ENCODE measurements at regions of chr1 and their contacts with region 1.

Region 1: DNA sequence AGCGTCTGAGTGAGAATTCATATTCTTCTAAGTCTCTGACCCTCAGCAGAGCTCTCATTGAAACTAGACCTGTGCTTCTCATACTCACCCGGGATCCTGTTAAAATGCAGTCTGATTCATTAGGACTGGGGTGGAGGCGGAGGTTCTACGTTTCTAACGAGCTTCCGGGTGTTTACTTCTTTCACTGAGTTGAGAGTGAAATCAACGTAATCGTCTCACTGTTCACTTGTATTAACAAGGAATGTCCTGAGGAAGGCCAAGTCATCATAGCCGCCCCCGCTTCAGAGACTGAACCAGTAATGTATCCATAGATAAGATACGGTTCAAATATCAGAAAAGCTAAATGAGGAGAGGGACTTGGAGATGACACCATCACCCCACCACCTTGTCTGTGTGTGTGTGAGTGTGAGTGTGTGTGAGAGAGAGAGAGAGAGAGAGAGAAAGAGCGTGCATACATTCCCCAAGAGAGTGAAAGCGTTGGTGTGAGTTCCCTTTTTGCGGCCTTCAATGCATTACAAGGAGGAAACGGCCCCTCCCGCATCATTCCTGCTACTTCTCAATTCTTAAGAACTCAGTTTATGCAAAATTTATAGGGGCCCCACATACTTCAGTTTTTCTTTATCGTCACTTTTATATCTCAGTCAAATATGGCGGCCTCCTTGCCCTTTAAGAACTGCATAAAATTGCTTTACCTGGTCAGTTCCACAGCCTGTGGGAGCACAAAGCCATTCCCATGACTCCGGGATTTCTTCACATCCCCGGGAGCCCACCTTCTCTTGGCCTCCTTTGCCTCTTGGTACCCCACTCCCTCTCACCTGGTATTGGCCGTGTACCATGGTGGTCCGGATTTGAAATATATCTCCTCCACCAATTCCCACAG is 19.8 kb downstream of the KMO start:
- DNase-seq: peak; percentile 93
- ATAC-seq: peak; percentile 91
- H3K4me3 ChIP-seq: peak overlapping the region; percentile 52 to 77 (median 65)
- H3K4me3 Mint-ChIP-seq: peak overlapping the region; percentile 93
- H3K27ac ChIP-seq: peak overlapping the region; percentile 95 to 97
- H3K27ac Mint-ChIP-seq: peak overlapping the region; percentile 99
- H3K4me1 ChIP-seq: peaks cover 39 to 41% of the 10 kb centered on the region in 2 donors
- H3K4me1 Mint-ChIP-seq: peaks cover 51% of the 10 kb centered on the region
- H3K27me3 ChIP-seq: no peaks in the 10 kb centered on the region
- H3K27me3 Mint-ChIP-seq: peaks cover 3% of the 10 kb centered on the region
- CTCF ChIP-seq: no peak

Region 2: DNA sequence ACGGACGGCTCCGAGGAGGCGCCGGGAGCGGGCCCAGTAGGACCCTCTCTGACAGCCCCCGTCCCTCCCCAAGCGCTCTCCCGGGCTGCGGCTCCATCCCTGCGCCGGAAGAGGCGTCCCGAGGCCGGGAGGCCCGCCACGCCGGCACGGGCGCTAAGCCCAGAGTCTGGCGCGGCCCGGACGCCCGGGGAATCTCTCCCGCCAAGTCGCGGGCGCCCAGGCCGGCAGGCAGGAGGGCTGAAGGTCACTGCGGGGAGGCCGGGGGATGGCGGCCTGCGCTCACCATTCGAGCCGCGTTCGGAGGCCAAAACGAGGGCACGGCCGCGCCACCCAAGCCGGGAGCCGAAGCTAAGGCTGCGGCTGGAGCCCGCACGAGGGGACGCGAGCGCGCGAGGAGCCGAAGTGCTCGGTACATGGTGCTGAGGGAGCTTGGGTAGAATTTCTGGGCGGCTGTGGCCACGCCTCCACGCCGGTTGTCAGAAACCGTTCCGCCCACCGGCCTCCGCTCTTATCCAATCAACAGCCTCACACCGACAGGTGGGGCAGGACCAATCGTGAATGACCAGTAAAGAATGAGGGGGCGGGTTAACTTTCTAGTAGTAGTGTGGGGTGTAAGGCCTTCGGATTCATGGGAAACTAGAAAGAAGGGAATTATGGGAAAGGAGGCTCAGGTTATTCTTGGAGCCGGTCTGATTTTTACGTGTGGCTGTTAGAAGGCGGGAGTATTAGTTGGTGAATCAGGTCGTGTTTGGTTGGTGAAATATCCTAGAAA is 32.5 kb before region 1 on chr1 and contains the start of gene FH:
- CTCF ChIA-PET with region 1: interaction called, 3 read pairs
- POLR2A ChIA-PET with region 1: interaction called, 4 read pairs
- intact Hi-C with region 1: loop called (anchors 1 kb)
- DNase-seq: peak; percentile 97
- ATAC-seq: peak; percentile 98
- H3K4me3 ChIP-seq: peak within 1 kb of the TSS; percentile 56 to 84 (median 79)
- H3K4me3 Mint-ChIP-seq: peak within 1 kb of the TSS; percentile 89
- H3K27ac ChIP-seq: peak within 1 kb of the TSS; percentile 56 to 84
- H3K27ac Mint-ChIP-seq: peak within 1 kb of the TSS; percentile 71
- H3K4me1 ChIP-seq: peaks cover 9 to 10% of the 10 kb centered on the region in 2 donors
- H3K4me1 Mint-ChIP-seq: peaks cover 23% of the 10 kb centered on the region
- H3K27me3 ChIP-seq: peaks cover 0 to 3% (median 0%) of the 10 kb centered on the region in 4 experiments
- H3K27me3 Mint-ChIP-seq: peaks cover 3% of the 10 kb centered on the region
- CTCF ChIP-seq: no peak
- total RNA-seq, gene FH: 26.0 and 32.4 TPM in 2 replicates

Region 3: GRCh38 chr1:241600496-241600901 is 48.5 kb after region 1 on chr1:
- CTCF ChIA-PET with region 1: no interaction called
- POLR2A ChIA-PET with region 1: interaction called, 3 read pairs
- intact Hi-C with region 1: loop called (anchors 5 kb)
- DNase-seq: peak; percentile 24
- ATAC-seq: peak; percentile 49
- H3K4me3 ChIP-seq: peak overlapping the region in 1 of 5 experiments; percentile 3
- H3K4me3 Mint-ChIP-seq: peak overlapping the region; percentile 35
- H3K27ac ChIP-seq: peak overlapping the region; percentile 34 to 67
- H3K27ac Mint-ChIP-seq: peak overlapping the region; percentile 79
- H3K4me1 ChIP-seq: peaks cover 33 to 37% of the 10 kb centered on the region in 2 donors
- H3K4me1 Mint-ChIP-seq: peaks cover 49% of the 10 kb centered on the region
- H3K27me3 ChIP-seq: no peaks in the 10 kb centered on the region
- H3K27me3 Mint-ChIP-seq: no peaks in the 10 kb centered on the region
- CTCF ChIP-seq: no peak

Region 4: DNA sequence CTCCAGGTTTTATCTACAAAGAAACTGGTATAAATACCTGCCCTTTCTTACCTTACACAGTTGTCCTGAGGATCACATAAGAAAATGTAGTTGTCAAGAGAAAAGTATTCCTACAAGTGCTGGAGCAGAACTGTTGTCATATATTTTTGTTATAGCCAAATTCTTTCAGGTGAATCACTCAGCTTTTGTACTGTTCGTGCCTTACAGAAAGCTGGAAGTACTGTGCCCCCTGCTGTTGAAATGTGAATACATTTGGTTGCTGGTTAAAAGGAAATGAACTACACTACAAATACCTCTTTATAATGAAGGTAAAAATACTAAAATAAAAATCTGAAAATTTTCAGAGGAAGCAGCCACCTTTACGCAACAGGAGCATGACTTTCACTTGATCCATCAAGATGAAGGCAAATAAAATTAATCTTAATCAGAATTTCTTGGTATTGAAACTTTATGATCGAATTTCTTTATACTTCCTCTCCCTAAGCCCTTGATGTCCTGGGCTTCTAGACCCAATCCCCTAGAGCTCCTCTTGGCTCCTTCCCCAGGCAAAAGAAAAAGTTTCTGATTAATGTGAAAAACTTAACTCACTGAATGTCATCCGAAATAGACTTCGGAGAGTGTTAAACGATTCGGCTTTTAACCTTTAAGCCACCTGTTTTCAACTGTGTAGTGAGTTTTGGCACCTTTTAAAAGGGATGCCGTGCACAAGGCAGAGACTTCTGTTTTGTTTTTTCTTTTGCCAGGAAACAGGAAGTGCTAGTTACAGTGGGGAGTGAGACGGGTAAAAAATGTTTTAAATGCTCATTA is 75.7 kb after region 1 on chr1:
- CTCF ChIA-PET with region 1: interaction called, 7 read pairs
- POLR2A ChIA-PET with region 1: interaction called, 3 read pairs
- intact Hi-C with region 1: loop called (anchors 5 kb)
- DNase-seq: peak; percentile 78
- ATAC-seq: peak; percentile 83
- H3K4me3 ChIP-seq: peak overlapping the region in 4 of 5 experiments; percentile 6 to 41 (median 17)
- H3K4me3 Mint-ChIP-seq: peak overlapping the region; percentile 63
- H3K27ac ChIP-seq: peak overlapping the region; percentile 66 to 71
- H3K27ac Mint-ChIP-seq: peak overlapping the region; percentile 88
- H3K4me1 ChIP-seq: peaks cover 14 to 25% of the 10 kb centered on the region in 2 donors
- H3K4me1 Mint-ChIP-seq: peaks cover 42% of the 10 kb centered on the region
- H3K27me3 ChIP-seq: no peaks in the 10 kb centered on the region
- H3K27me3 Mint-ChIP-seq: no peaks in the 10 kb centered on the region
- CTCF ChIP-seq: peak; percentile 82